Esophagus squamous epithelium (tissue), 5 donors: ENCODE measurements at regions of chr13 and their contacts with region 1.

Region 1: DNA sequence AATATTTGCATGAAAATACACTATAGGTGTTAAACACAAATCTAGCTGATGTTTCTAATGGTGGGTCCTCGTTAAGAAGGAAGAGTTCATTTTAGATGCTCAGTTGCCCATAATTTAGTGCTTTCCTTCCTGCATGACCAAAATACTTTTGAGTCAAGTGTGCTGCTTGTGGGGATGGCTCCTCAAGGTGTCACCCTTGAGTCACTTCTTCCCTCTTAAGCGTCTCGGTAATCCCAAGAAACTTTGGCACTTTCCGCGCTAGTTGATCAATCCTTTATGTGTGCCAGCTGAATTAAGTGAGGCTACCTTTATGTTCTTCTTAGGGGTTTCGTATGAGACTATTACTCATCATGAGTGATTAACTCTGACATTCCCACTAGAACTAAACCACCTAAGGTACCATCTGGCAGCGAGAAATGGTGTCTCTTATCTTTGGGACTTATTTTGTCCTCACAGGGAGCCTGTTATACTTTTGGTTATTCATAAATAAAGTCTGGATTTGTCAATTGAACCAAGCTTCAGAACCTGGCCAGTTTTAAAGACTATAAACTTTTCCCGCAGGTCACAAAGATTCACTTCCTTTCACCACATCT is 106.8 kb downstream of the NHLRC3 start:
- DNase-seq: no peak
- H3K4me3 ChIP-seq: no peak overlapping the region
- H3K27ac ChIP-seq: no peak overlapping the region
- H3K4me1 ChIP-seq: peaks cover 0 to 11% (median 0%) of the 10 kb centered on the region in 3 donors
- H3K27me3 ChIP-seq: peaks cover 0 to 33% (median 0%) of the 10 kb centered on the region in 4 donors
- CTCF ChIP-seq: peak; percentile 26 to 74 (median 57)
- POLR2A ChIP-seq: no peak

Region 2: GRCh38 chr13:39245688-39246087 is 100.7 kb after region 1 on chr13:
- intact Hi-C with region 1: loop called (anchors 10 kb)
- DNase-seq: no peak
- H3K4me3 ChIP-seq: no peak overlapping the region
- H3K27ac ChIP-seq: no peak overlapping the region
- H3K4me1 ChIP-seq: no peaks in the 10 kb centered on the region
- H3K27me3 ChIP-seq: no peaks in the 10 kb centered on the region
- CTCF ChIP-seq: no peak
- POLR2A ChIP-seq: no peak

Region 3: GRCh38 chr13:39616087-39616694 is 471.2 kb after region 1 on chr13:
- intact Hi-C with region 1: loop called (anchors 5 kb)
- DNase-seq: no peak
- H3K4me3 ChIP-seq: no peak overlapping the region
- H3K27ac ChIP-seq: no peak overlapping the region
- H3K4me1 ChIP-seq: peaks cover 0 to 5% (median 0%) of the 10 kb centered on the region in 3 donors
- H3K27me3 ChIP-seq: no peaks in the 10 kb centered on the region
- CTCF ChIP-seq: peak; percentile 51 to 81 (median 70)
- POLR2A ChIP-seq: no peak

Region 4: DNA sequence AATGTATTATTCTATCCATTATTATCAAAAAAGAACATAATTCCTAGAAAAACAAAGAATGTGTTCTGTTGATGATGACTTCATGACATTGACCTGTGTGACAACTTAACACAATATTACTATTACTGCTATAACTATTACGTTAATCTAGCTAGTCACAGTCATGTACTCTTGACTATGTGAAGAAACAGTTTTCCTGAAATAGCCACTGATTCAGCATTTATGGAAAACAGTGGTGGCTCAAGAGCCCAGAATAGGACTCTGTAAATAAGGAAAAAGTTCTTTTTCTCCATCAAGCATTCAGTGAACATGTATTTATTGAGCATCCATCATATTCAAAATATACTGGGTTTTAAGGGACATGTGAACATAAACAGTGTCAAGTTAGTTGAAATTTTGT is 603.9 kb after region 1 on chr13:
- intact Hi-C with region 1: no loop called
- DNase-seq: no peak
- H3K4me3 ChIP-seq: no peak overlapping the region
- H3K27ac ChIP-seq: no peak overlapping the region
- H3K4me1 ChIP-seq: no peaks in the 10 kb centered on the region
- H3K27me3 ChIP-seq: no peaks in the 10 kb centered on the region
- CTCF ChIP-seq: no peak
- POLR2A ChIP-seq: no peak